ENCODE measurements at regions of chr7 and their contacts with region 1.

Region 1: DNA sequence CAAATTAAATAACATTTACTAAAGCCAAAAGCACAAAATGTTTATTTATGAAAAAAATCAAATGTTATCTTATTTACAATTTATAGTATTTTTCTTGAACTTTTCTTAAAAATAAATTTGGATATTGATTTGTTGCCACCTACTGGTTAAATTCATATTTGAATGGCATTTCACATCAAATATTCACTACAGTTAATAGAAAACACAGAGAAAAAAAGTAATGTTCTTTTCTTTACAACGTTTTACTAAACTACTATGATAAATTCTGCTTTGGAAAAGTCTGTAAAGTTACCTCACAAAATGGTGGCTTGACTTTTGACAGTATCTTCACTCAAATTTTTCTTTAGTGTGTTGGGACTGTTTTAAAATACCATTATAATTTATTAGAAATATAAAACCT is 52.7 kb downstream of the SRPK2 start:
- DNase-seq: no peak
- H3K4me3 ChIP-seq: no peak overlapping the region
- H3K27ac ChIP-seq: no peak overlapping the region
- H3K4me1 ChIP-seq: peaks cover 0 to 11% of the 10 kb centered on the region in 2 donors
- H3K27me3 ChIP-seq: no peaks in the 10 kb centered on the region
- CTCF ChIP-seq: peak; percentile 13 to 58 (median 42)
- POLR2A ChIP-seq: no peak

Region 2: DNA sequence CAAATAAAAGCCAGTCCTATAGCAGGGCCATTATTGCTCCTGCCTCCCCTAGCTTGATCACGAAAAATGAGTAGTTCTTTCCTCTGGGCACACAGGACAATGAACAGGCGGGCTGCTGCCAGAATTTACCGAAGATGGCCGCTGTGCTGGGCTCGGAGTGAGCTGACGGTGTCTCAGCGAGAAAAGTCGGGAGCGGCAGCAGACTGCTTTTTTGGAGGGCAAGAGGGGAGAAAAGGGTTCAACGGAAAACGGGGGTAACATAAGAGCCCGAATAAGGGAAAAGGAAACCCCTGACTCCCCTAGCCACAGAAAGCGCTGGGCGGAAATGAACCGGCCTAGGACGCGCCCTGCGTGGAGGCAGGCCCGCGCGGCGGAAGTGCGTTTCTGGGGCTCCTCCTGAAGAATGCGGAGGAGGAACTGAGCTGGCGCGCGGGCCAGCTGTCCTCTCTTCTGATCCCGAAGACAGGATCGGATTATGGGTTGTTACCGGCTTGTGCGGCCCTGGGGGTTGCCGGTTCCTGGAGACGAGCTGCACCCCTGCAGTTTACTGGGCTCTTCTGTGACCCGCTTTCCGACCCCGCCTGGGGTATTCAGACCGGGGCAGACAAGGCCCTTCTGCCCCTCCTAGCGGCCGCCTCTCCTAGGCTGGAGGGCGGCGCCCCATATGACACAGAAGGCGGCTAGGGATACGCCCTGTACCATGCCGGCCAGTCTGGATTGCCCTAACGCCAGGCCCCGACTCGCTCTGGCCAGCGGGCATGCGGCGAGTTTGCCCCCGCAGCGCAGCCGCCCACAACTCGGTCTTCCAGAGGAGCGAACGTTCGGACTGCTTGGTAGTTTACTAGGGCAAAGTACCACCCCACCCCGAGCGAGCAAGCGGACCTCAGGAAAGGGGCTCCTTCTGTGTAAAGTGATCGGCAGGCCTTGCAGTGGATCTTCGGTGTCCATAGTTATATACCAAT is 352.1 kb before region 1 on chr7:
- intact Hi-C with region 1: loop called in 1 of 2 experiments (anchors 10 kb)
- DNase-seq: peak; percentile 86 to 92 (median 91)
- H3K4me3 ChIP-seq: peak overlapping the region in 3 of 4 donors; percentile 36 to 77 (median 61)
- H3K27ac ChIP-seq: peak overlapping the region; percentile 85 to 98 (median 96)
- H3K4me1 ChIP-seq: peaks cover 38 to 43% of the 10 kb centered on the region in 2 donors
- H3K27me3 ChIP-seq: no peaks in the 10 kb centered on the region
- CTCF ChIP-seq: peak; percentile 20 to 70 (median 55)
- POLR2A ChIP-seq: peak; percentile 51 to 82

Region 3: DNA sequence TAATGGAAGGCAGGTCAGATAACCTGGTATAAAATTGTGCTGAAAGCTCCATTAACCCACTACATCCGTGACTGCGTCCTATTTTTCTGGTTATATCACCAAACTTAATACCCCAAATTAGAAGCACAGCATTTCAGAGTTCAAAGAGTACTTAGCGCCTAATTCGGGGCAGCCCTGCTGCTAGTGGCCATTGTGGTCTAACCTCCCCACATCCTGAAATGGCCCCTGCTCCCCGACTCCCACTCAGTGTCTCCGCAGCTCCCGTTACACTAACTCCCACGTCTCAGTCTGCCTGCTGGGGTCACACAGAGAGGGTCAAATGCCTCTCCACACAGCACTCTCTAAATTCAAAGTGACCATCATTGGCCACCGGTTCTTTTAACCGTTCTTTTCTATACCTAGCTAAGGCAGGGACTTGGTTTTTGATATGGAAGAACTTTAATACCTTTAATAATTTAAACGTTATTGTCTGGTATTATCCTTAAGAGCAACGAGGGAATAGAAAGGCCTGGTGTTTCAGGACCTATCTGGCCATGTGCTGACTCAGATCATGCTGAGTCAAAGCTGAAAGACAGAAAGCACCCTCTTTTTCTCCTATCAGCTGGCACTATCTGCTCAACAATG is 204.9 kb before region 1 on chr7:
- intact Hi-C with region 1: loop called in 1 of 2 experiments (anchors 10 kb)
- DNase-seq: peak in 2 of 7 donors; percentile 24 to 33
- H3K4me3 ChIP-seq: no peak overlapping the region
- H3K27ac ChIP-seq: no peak overlapping the region
- H3K4me1 ChIP-seq: peaks cover 8 to 12% of the 10 kb centered on the region in 2 donors
- H3K27me3 ChIP-seq: no peaks in the 10 kb centered on the region
- CTCF ChIP-seq: no peak
- POLR2A ChIP-seq: no peak

Measured in adrenal gland (tissue), 19 donors.